BJ (cell line): ENCODE measurements at regions of chr1 and their contacts with region 1.

Region 1: GRCh38 chr1:40951943-40952743 is 27.4 kb upstream of the CTPS1 start:
- DNase-seq: no peak
- H3K4me3 ChIP-seq: no peak overlapping the region
- H3K27me3 ChIP-seq: no peaks in the 10 kb centered on the region
- CTCF ChIP-seq: peak; percentile 96

Region 2: DNA sequence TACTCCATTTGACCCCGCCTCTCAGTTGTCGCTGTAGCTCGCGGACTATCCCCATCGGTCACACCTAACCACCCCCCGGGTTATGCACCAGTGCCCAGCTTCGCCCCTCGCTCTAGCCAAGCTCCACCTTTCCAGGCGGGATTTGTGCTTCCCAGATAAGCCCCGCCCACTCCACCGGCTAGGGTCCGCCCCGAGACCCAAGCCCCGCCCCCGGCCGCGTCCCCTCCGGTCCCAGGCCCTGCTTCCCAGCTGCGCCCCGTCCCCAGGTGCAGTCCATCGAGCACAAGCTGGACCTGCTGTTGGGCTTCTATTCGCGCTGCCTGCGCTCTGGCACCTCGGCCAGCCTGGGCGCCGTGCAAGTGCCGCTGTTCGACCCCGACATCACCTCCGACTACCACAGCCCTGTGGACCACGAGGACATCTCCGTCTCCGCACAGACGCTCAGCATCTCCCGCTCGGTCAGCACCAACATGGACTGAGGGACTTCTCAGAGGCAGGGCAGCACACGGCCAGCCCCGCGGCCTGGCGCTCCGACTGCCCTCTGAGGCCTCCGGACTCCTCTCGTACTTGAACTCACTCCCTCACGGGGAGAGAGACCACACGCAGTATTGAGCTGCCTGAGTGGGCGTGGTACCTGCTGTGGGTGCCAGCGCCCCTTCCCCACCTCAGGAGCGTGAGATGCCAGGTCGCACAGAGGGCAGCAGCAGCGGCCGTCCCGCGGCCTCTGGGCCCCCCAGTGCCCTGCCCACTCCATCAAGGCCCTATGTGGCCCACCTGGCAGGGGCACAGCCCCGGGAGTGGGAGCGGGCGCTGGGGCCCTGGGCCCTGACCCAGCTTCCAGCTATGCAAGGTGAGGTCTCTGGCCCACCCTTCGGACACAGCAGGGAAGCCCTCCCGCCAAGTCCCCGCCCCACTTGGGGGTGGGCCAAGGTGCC is 113.8 kb before region 1 on chr1:
- CTCF ChIA-PET with region 1: interaction called, 10 read pairs
- POLR2A ChIA-PET with region 1: no interaction called
- DNase-seq: no peak
- H3K4me3 ChIP-seq: no peak overlapping the region
- H3K27me3 ChIP-seq: peaks cover 5% of the 10 kb centered on the region
- CTCF ChIP-seq: no peak

Region 3: DNA sequence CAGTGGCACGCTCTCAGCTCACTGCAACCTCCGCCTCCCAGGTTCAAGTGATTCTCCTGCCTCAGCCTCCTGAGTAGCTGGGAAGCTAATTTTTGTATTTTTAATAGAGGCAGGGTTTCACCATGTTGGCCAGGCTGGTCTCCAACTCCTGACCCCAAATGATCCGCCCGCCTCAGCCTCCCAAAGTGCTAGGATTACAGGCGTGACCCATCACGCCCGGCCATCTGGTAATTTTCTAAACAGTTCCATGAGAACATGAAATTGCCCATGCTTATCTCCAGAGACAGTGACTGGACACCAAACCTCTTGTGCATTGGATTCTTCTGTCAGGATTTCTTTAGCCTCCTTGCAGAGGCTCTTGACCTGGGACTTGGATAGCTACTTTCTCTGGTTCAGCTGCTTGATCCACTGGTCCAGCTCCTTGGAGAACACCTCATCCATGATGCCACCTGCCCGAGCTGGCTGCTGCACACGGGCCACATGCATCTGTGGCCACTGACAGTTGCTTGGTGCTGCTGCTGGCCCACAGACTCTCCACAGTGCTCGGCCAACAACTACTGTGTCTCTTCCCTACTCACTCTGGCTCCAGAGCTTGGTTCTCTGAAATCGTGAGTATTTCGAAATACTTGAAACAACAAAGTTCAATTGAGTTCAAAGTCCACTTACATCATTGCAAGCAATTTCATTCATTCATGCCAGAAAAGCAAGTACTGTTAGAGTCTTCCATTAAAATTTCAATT is 12.7 kb before region 1 on chr1:
- CTCF ChIA-PET with region 1: interaction called, 57 read pairs
- POLR2A ChIA-PET with region 1: no interaction called
- DNase-seq: peak; percentile 18
- H3K4me3 ChIP-seq: no peak overlapping the region
- H3K27me3 ChIP-seq: no peaks in the 10 kb centered on the region
- CTCF ChIP-seq: no peak

Region 4: DNA sequence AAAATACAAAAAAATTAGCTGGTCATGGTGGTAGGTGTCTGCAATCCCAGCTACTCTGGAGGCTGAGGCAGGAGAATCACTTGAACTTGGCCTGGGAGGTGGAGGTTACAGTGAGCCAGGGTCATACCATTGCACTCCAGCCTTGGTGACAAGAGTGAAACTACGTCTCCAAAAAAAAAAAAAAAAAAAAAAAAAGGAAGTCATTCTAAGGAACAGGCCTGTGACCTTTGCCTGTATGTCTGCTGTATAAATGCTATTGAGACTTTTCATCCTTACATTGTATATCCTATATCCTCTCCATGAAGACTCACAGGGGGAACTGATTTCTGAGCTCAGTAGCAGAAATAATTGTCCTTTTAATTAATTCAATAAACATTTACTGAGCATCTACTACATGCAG is 19.8 kb after region 1 on chr1:
- CTCF ChIA-PET with region 1: interaction called, 10 read pairs
- POLR2A ChIA-PET with region 1: no interaction called
- DNase-seq: no peak
- H3K4me3 ChIP-seq: no peak overlapping the region
- H3K27me3 ChIP-seq: no peaks in the 10 kb centered on the region
- CTCF ChIP-seq: no peak

Region 5: GRCh38 chr1:41003640-41004220 is 51.6 kb after region 1 on chr1:
- CTCF ChIA-PET with region 1: interaction called, 31 read pairs
- POLR2A ChIA-PET with region 1: no interaction called
- DNase-seq: peak; percentile 93
- H3K4me3 ChIP-seq: no peak overlapping the region
- H3K27me3 ChIP-seq: no peaks in the 10 kb centered on the region
- CTCF ChIP-seq: peak; percentile 71